ENCODE measurements at regions of chr19 and their contacts with region 1.

Region 1: DNA sequence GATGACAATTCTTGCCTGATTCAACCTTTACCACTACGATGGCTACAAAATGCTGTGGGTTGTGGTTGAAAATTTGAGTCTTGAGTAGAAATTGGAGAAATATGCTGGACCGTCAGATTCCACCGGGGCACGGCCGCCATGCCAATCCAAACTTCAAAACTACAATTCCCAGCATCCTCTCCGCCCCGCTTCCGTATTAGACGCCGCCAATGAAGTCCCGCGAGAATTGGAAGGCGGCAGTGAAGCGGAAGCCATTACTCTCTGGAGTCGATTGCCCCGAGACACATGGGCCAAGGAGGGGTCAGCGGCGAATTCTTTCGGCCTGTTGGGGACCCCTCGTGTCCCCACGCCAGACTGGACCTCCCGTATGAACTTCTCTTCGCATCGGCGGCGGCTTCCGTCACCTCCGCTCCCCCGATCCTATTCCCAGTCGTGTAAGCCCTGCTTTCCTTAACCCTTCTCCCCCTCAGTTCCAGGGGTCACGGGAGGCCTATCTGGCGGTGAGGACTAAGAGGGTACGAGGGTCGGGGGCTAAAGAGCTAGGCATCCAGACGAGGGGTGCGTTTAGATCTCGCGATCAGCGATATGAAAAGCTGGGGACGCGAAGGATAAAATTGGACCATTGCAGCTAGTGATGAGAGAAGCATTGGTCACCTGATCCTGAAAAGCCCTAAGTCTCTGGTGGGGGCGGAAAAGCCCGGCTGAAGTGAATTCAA is at the start of gene ZNF317:
- DNase-seq: peak; percentile 97
- ATAC-seq: peak; percentile 97
- total RNA-seq, gene ZNF317: 14.7 TPM

Region 2: DNA sequence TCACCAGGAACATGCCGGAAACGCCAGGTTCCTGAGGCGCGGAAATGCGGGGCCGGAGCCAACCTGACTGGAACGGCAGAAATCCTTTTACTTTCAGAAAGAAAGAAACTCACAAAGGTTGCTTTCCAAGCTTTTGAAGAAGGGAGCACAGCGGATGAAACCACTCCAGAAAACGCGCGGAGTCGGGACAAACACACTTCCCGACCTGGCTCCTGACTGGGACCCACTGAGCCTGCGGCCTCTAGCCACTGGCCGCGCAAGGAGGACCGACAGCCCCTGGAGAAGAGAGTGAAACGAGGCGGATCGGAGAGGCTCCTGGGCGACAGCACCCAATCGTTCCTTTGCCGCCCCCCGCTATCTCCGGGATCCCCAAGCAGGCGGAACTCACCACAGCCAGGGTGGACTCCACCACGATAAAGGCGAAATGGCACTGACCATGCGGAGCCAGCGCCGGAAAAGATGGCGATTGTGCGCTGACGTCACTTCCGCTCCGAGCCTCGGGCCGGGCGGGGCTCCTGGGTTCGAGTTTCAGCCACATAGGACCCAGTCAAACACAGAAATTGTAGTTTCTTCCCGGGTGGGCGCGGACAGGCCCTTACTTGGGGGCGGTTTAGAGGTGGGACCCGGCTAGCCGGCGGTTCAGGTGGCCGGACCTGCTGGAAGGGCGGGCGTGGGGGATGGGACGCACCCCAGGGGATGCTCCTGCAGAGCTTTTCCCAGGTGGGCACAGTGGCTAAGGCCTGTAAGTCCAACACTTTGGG is 443.9 kb after region 1 on chr19 and contains the start of gene ZNF121:
- intact Hi-C with region 1: loop called (anchors 2 kb)
- DNase-seq: peak; percentile 93
- ATAC-seq: peak; percentile 95
- total RNA-seq, gene ZNF121: 20.7 TPM